PC-3 (cell line): ENCODE measurements at regions of chr14 and their contacts with region 1.

Region 1: GRCh38 chr14:45134051-45134958 is at the start of gene FKBP3:
- DNase-seq: peak; percentile 99
- ATAC-seq: peak; percentile 85
- H3K4me3 ChIP-seq: peak within 1 kb of the TSS; percentile 97
- H3K27ac ChIP-seq: peak within 1 kb of the TSS; percentile 32
- H3K4me1 ChIP-seq: peaks cover 19% of the 10 kb centered on the region
- H3K27me3 ChIP-seq: no peaks in the 10 kb centered on the region
- CTCF ChIP-seq: peak; percentile 61
- total RNA-seq, gene FKBP3: 48.0 and 53.7 TPM in 2 replicates

Region 2: DNA sequence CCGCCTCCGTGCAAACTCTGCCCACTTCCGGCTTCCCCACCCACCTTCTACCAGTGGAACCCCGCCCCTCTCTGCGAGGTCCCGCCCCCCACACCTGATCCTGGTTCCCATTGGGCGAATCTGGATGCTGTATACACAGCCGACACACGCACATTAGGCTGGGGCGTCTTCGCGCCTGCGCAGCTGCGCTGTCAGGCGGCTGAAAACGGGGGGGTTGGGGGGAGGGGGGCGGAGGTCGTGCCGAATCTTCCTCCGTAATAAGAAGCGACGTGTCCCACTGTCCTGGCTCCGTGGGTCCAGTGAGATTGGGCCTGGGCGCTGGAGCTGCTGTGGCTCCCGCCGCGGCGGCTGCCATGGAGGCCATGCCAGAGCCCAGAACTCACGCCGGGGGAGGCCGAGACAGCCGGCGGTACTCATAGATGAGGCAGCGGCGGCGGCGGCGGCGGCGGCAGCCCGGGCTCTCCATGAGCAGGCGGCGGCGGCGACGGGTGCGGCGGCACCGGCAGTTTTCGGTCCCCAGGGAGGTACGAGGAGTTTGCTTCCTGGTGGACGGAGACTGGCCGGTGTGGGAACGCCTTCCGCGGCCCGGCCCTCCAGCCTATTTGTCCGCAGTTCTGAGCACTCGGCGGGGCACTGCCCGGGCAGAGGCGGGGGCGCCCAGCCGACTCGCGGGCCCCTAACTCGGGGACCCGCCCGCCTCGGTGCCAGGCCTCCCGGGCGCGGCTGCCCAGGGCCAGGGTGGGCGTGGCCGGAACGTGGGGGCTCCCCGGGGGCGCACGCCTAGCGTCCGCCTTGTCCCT is 237.1 kb before region 1 on chr14:
- CTCF ChIA-PET with region 1: no interaction called
- POLR2A ChIA-PET with region 1: no interaction called
- intact Hi-C with region 1: loop called (anchors 1 kb)
- DNase-seq: peak; percentile 98
- ATAC-seq: peak; percentile 93
- H3K4me3 ChIP-seq: peak overlapping the region; percentile 81
- H3K27ac ChIP-seq: peak overlapping the region; percentile 68
- H3K4me1 ChIP-seq: peaks cover 16% of the 10 kb centered on the region
- H3K27me3 ChIP-seq: no peaks in the 10 kb centered on the region
- CTCF ChIP-seq: no peak

Region 3: DNA sequence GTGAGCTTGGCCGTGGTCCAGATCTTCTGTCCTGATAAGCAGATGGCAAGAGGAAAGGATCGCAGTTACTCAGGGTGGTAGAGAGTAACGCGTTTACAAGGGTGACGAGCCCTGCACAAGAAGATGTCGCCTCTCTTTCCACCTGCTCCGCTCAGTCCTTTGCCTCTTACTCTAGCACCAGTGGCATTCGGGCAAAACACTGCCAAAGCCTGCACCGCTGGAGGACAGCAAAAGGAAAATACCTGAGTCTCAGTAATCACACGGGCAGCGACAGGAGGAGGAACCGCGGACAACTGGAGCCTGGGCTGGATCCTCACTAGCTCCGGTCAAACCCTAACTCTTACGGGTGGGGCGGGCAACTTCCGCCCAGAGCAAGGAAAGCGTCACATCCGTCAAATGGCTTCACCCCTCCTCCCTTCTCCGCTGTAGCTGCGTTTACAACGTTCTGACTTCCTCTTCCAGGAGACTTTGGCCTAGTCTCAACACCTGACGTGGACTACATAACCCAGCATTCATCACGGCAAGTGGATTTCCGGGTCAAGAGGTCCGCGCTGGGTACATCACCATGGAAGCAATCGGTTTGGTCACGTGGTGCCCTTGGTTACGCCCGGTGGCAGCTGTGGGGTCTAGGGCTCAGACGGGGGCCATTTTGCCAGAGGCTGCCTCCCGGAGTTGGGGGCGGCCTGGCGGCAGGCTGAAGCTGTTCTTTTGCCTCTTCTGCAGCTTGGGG is 172.5 kb before region 1 on chr14 and contains the starts of genes KLHL28 and TOGARAM1:
- CTCF ChIA-PET with region 1: no interaction called
- POLR2A ChIA-PET with region 1: interaction called, 4 read pairs
- intact Hi-C with region 1: loop called (anchors 1 kb)
- DNase-seq: peak; percentile 100
- ATAC-seq: peak; percentile 85
- H3K4me3 ChIP-seq: peak within 1 kb of the TSS; percentile 89
- H3K27ac ChIP-seq: peak within 1 kb of the TSS; percentile 62
- H3K4me1 ChIP-seq: peaks cover 35% of the 10 kb centered on the region
- H3K27me3 ChIP-seq: no peaks in the 10 kb centered on the region
- CTCF ChIP-seq: no peak
- total RNA-seq, gene KLHL28: 2.4 and 2.5 TPM in 2 replicates
- total RNA-seq, gene TOGARAM1: 5.8 and 6.3 TPM in 2 replicates

Region 4: DNA sequence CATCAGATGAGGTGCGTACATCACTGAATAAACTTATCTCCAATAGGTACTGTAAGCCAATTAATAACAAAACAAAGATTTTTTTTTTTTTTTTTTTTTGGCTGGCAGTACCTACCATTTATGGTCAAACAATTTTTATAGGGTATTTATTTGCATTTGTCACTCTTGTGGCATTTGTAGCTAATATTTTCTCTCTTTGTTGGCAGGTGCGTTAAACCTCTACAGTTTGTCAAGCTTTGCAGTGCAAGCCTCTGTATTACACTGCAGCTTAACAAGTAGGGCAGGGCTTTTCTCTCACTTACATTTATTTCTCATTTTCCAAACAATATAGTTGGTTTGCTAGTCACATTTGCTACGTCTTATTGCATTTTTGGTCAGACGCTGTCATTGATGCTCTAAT is 38.1 kb before region 1 on chr14:
- CTCF ChIA-PET with region 1: no interaction called
- POLR2A ChIA-PET with region 1: no interaction called
- intact Hi-C with region 1: loop called (anchors 1 kb)
- DNase-seq: peak; percentile 78
- ATAC-seq: peak; percentile 98
- H3K4me3 ChIP-seq: no peak overlapping the region
- H3K27ac ChIP-seq: no peak overlapping the region
- H3K4me1 ChIP-seq: peaks cover 23% of the 10 kb centered on the region
- H3K27me3 ChIP-seq: no peaks in the 10 kb centered on the region
- CTCF ChIP-seq: no peak

Region 5: GRCh38 chr14:45201905-45202304 is 67.6 kb after region 1 on chr14:
- CTCF ChIA-PET with region 1: no interaction called
- POLR2A ChIA-PET with region 1: no interaction called
- intact Hi-C with region 1: loop called (anchors 2 kb)
- DNase-seq: peak; percentile 13
- ATAC-seq: peak; percentile 92
- H3K4me3 ChIP-seq: no peak overlapping the region
- H3K27ac ChIP-seq: no peak overlapping the region
- H3K4me1 ChIP-seq: no peaks in the 10 kb centered on the region
- H3K27me3 ChIP-seq: no peaks in the 10 kb centered on the region
- CTCF ChIP-seq: peak; percentile 37; the same call in 1 of the 2 replicates

Region 6: DNA sequence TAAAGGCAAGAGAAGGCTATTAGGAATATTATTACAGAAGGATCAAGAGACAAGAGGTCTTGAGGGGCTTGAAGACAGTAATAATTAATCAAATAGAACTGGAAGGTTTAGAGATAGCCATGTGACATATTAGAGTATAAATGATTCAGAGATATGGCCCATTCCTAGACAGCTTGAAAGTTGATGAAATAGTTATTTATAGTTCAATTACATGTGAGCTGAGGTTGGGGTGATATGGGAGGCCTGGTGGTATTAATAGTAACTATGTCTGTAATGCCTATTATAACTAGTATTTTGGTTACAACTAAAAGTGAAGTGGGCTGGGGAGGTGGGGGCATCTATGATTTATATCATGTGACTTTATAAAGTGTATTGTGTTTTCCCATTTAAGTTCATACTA is 132.8 kb after region 1 on chr14:
- CTCF ChIA-PET with region 1: interaction called, 4 read pairs
- POLR2A ChIA-PET with region 1: no interaction called
- intact Hi-C with region 1: loop called (anchors 1 kb)
- DNase-seq: no peak
- ATAC-seq: no peak
- H3K4me3 ChIP-seq: no peak overlapping the region
- H3K27ac ChIP-seq: no peak overlapping the region
- H3K4me1 ChIP-seq: no peaks in the 10 kb centered on the region
- H3K27me3 ChIP-seq: no peaks in the 10 kb centered on the region
- CTCF ChIP-seq: no peak